ENCODE measurements at regions of chr17 and their contacts with region 1.

Region 1: DNA sequence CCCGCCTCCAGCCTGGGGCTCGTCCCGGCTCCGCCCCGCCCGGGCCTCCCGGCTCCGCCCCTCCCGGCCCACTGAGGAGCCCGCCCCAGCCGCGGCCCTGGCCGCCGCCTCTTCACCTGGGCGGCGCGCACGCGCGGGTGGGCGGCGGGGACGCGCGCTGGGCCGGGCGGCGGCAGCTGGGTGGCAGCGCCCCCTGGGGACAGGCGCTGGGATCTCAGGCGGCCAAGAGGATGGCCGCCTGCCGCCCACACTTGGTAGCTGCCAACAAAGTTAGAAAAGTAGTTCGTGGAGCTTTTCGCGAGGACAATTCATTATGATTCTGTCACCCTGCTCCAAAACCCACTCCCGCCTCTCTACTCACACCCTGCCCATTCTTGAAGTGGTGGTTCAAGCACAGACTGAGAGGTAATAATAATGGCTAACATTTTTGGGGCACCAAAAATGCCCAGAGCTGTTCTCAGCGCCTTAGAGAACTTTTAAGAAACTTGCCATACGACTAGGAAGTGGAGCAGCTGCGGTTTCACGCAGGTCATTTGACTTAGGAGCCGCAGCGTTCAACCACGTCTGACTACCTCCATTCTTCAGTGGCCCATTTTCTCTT is 340 bp upstream of the MYO1D start:
- DNase-seq: peak; percentile 18
- ATAC-seq: peak; percentile 100
- H3K4me3 ChIP-seq: peak overlapping the region; percentile 59 to 67
- H3K27ac ChIP-seq: no peak overlapping the region
- H3K4me1 ChIP-seq: peaks cover 3% of the 10 kb centered on the region; the same call in 1 of the 2 replicates
- H3K27me3 ChIP-seq: peaks cover 20% of the 10 kb centered on the region
- CTCF ChIP-seq: peak; percentile 98

Region 2: DNA sequence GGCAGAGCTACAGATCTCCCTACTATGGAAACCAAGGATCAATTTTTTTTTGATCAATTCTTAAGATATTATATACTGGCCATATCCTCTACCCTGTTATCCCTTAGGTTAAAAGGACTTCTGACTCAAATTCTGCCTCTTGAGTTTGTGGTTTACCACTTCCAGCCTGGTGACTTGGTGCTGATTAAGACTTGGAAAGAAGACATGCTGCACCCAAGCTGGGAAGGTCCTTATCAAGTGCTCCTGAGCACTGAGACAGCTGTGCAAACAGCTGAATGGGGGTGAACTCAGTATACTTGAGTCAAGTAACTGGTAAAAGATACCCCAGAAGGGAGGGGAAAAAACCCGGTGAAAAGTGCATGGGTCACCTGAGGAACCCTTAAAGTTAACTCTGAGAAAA is 93.9 kb after region 1 on chr17:
- CTCF ChIA-PET with region 1: interaction called, 15 read pairs
- POLR2A ChIA-PET with region 1: no interaction called
- in situ Hi-C with region 1: no loop called
- intact Hi-C with region 1: no loop called
- DNase-seq: no peak
- ATAC-seq: no peak
- H3K4me3 ChIP-seq: no peak overlapping the region
- H3K27ac ChIP-seq: no peak overlapping the region
- H3K4me1 ChIP-seq: no peaks in the 10 kb centered on the region
- H3K27me3 ChIP-seq: no peaks in the 10 kb centered on the region
- CTCF ChIP-seq: no peak